ENCODE measurements at regions of chr3 and their contacts with region 1.

Region 1: GRCh38 chr3:49802719-49803464 is at the start of gene INKA1:
- DNase-seq: peak; percentile 83 to 92 (median 83)
- H3K4me3 ChIP-seq: peak within 1 kb of the TSS; percentile 91
- H3K4me3 Mint-ChIP-seq: peak within 1 kb of the TSS; percentile 86 to 95 (median 91)
- H3K27ac ChIP-seq: peak within 1 kb of the TSS; percentile 86
- H3K27ac Mint-ChIP-seq: peak within 1 kb of the TSS; percentile 81 to 97 (median 93)
- H3K4me1 ChIP-seq: peaks cover 35% of the 10 kb centered on the region
- H3K4me1 Mint-ChIP-seq: peaks cover 24 to 51% (median 33%) of the 10 kb centered on the region in 3 donors
- H3K27me3 ChIP-seq: no peaks in the 10 kb centered on the region
- H3K27me3 Mint-ChIP-seq: peaks cover 0 to 6% of the 10 kb centered on the region in 2 donors
- total RNA-seq, gene INKA1: 1.1 to 1.7 TPM

Region 2: DNA sequence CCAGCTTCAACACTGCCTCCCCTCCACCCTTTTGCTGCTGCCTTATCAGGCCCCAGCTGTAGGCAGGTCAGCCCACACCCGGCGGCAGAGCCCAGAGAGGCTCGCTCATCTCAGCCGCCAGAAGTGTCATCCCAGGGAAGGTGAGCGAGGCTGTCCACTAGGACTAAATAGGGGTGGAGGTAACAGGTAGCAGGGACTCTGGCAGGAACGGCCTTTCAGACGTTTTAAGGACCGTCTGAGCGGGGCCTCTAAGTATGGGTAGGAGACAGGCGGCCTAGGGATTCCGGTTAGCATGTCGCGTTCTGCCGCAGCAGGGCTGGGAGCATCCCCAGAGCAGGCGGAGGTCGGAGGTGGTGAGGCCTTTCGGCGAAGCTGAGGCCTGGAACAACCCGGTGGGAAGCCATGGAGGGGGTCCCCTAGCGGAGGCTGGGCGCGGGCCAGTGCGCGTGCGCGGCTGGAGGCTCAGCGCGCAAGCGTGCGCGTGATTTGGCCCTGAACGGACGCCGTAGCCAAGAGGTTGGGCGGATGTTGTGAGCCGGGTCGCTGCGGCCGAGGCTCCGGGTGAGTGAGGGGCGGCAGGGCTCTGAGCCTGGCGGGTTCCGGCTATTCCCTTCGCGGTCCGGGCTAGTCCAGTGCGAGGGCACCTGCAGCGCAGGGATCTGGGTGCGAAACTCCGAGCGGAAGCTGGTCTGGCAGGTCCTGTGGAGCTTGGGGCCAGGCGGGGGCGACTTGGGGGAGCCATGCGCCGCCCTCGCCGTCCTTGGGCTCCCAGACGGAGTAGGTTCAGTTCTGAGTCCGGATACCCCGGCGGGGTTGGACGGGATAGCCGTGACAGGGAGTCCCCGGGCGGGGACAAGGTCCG is 113.6 kb before region 1 on chr3 and contains the starts of genes MST1 and RNF123:
- CTCF ChIA-PET with region 1: no interaction called
- POLR2A ChIA-PET with region 1: no interaction called
- DNase-seq: peak; percentile 90 to 95 (median 92)
- H3K4me3 ChIP-seq: peak within 1 kb of the TSS; percentile 97
- H3K4me3 Mint-ChIP-seq: peak within 1 kb of the TSS; percentile 94 to 98 (median 97)
- H3K27ac ChIP-seq: peak within 1 kb of the TSS; percentile 76
- H3K27ac Mint-ChIP-seq: peak within 1 kb of the TSS; percentile 95 to 99 (median 96)
- H3K4me1 ChIP-seq: peaks cover 20% of the 10 kb centered on the region
- H3K4me1 Mint-ChIP-seq: peaks cover 34 to 66% (median 41%) of the 10 kb centered on the region in 3 donors
- H3K27me3 ChIP-seq: no peaks in the 10 kb centered on the region
- H3K27me3 Mint-ChIP-seq: peaks cover 0 to 5% of the 10 kb centered on the region in 2 donors
- total RNA-seq, gene MST1: 6.0 to 8.5 TPM
- total RNA-seq, gene RNF123: 38.8 to 43.7 TPM

Region 3: DNA sequence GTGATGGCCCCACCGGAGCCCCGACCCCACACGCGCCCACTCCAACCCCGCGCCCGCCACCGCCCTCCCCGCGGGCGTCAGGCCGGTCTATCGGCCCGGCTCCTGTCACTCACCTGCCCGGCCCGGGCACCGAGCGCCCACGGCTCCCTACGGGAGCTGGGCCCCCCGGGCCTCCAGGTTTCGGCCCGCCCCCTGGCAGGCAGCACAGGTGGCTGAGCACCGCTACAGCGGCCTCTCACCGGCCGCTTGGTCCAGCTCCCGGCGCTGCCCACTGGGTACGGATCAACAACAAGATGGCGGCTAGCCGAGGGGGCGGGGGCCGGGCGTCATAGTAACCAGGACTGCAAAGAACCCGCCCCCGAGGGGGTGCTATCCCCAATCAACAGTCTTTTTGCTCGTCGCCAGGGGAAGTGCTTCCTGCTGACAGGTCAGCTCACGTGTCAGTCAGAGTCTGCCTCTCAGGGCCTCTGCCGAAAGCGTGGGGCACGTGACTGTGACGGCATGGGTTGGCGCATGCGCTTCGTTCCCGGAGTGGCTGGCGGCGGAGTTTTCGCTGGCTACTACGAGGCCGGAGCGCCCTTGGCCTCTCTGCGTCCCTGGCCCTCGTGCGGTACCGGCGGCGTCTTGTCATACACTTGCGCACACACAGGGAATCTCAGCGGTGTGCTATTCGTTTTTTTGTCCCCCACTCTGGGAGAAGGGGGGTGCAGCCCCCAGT is 16.5 kb before region 1 on chr3 and contains the start of gene IP6K1:
- CTCF ChIA-PET with region 1: interaction called, 23 read pairs
- POLR2A ChIA-PET with region 1: interaction called, 18 read pairs
- DNase-seq: peak; percentile 99 to 100 (median 99)
- H3K4me3 ChIP-seq: peak within 1 kb of the TSS; percentile 90
- H3K4me3 Mint-ChIP-seq: peak within 1 kb of the TSS; percentile 93 to 98 (median 94)
- H3K27ac ChIP-seq: peak within 1 kb of the TSS; percentile 95
- H3K27ac Mint-ChIP-seq: peak within 1 kb of the TSS; percentile 98 to 100 (median 99)
- H3K4me1 ChIP-seq: peaks cover 35% of the 10 kb centered on the region
- H3K4me1 Mint-ChIP-seq: peaks cover 24 to 54% (median 44%) of the 10 kb centered on the region in 3 donors
- H3K27me3 ChIP-seq: no peaks in the 10 kb centered on the region
- H3K27me3 Mint-ChIP-seq: peaks cover 0 to 2% of the 10 kb centered on the region in 2 donors
- total RNA-seq, gene IP6K1: 37.1 to 47.5 TPM

Region 4: GRCh38 chr3:49813497-49814174 is 10.7 kb after region 1 on chr3 and contains the start of gene UBA7:
- CTCF ChIA-PET with region 1: interaction called, 35 read pairs
- POLR2A ChIA-PET with region 1: interaction called, 33 read pairs
- DNase-seq: peak in 4 of 5 donors; percentile 29 to 62 (median 44)
- H3K4me3 ChIP-seq: peak within 1 kb of the TSS; percentile 75
- H3K4me3 Mint-ChIP-seq: peak within 1 kb of the TSS; percentile 96 to 98 (median 98)
- H3K27ac ChIP-seq: peak within 1 kb of the TSS; percentile 63
- H3K27ac Mint-ChIP-seq: peak within 1 kb of the TSS; percentile 94 to 99 (median 99)
- H3K4me1 ChIP-seq: peaks cover 30% of the 10 kb centered on the region
- H3K4me1 Mint-ChIP-seq: peaks cover 26 to 47% (median 36%) of the 10 kb centered on the region in 3 donors
- H3K27me3 ChIP-seq: no peaks in the 10 kb centered on the region
- H3K27me3 Mint-ChIP-seq: no peaks in the 10 kb centered on the region
- total RNA-seq, gene UBA7: 57.8 to 58.3 TPM

Region 5: GRCh38 chr3:49844464-49845183 is 41.7 kb after region 1 on chr3:
- CTCF ChIA-PET with region 1: interaction called, 246 read pairs
- POLR2A ChIA-PET with region 1: interaction called, 41 read pairs
- DNase-seq: no peak
- H3K4me3 ChIP-seq: no peak overlapping the region
- H3K4me3 Mint-ChIP-seq: no peak overlapping the region
- H3K27ac ChIP-seq: no peak overlapping the region
- H3K27ac Mint-ChIP-seq: peak overlapping the region in 1 of 8 donors; percentile 55
- H3K4me1 ChIP-seq: no peaks in the 10 kb centered on the region
- H3K4me1 Mint-ChIP-seq: no peaks in the 10 kb centered on the region
- H3K27me3 ChIP-seq: no peaks in the 10 kb centered on the region
- H3K27me3 Mint-ChIP-seq: peaks cover 0 to 2% of the 10 kb centered on the region in 2 donors

Region 6: GRCh38 chr3:49883998-49884397 is 81.1 kb after region 1 on chr3:
- CTCF ChIA-PET with region 1: no interaction called
- POLR2A ChIA-PET with region 1: interaction called, 11 read pairs
- DNase-seq: no peak
- H3K4me3 ChIP-seq: no peak overlapping the region
- H3K4me3 Mint-ChIP-seq: no peak overlapping the region
- H3K27ac ChIP-seq: no peak overlapping the region
- H3K27ac Mint-ChIP-seq: no peak overlapping the region
- H3K4me1 ChIP-seq: no peaks in the 10 kb centered on the region
- H3K4me1 Mint-ChIP-seq: no peaks in the 10 kb centered on the region
- H3K27me3 ChIP-seq: no peaks in the 10 kb centered on the region
- H3K27me3 Mint-ChIP-seq: peaks cover 0 to 4% of the 10 kb centered on the region in 2 donors

Region 7: GRCh38 chr3:49939858-49940666 is 137.2 kb after region 1 on chr3 and contains the start of gene RBM6:
- CTCF ChIA-PET with region 1: no interaction called
- POLR2A ChIA-PET with region 1: no interaction called
- DNase-seq: peak; percentile 87 to 95 (median 91)
- H3K4me3 ChIP-seq: peak within 1 kb of the TSS; percentile 73
- H3K4me3 Mint-ChIP-seq: peak within 1 kb of the TSS; percentile 96 to 100 (median 98)
- H3K27ac ChIP-seq: peak within 1 kb of the TSS; percentile 78
- H3K27ac Mint-ChIP-seq: peak within 1 kb of the TSS; percentile 97 to 100 (median 98)
- H3K4me1 ChIP-seq: peaks cover 12% of the 10 kb centered on the region
- H3K4me1 Mint-ChIP-seq: peaks cover 25 to 38% (median 38%) of the 10 kb centered on the region in 3 donors
- H3K27me3 ChIP-seq: no peaks in the 10 kb centered on the region
- H3K27me3 Mint-ChIP-seq: no peaks in the 10 kb centered on the region
- total RNA-seq, gene RBM6: 71.6 to 75.8 TPM

Region 8: GRCh38 chr3:50227390-50228183 is 424.7 kb after region 1 on chr3:
- CTCF ChIA-PET with region 1: no interaction called
- POLR2A ChIA-PET with region 1: no interaction called
- DNase-seq: peak; percentile 88 to 93 (median 89)
- H3K4me3 ChIP-seq: peak overlapping the region; percentile 86
- H3K4me3 Mint-ChIP-seq: peak overlapping the region; percentile 89 to 99 (median 94)
- H3K27ac ChIP-seq: peak overlapping the region; percentile 63
- H3K27ac Mint-ChIP-seq: peak overlapping the region; percentile 79 to 96 (median 92)
- H3K4me1 ChIP-seq: peaks cover 20% of the 10 kb centered on the region
- H3K4me1 Mint-ChIP-seq: peaks cover 15 to 33% (median 24%) of the 10 kb centered on the region in 3 donors
- H3K27me3 ChIP-seq: no peaks in the 10 kb centered on the region
- H3K27me3 Mint-ChIP-seq: peaks cover 0 to 3% of the 10 kb centered on the region in 2 donors

Region 9: DNA sequence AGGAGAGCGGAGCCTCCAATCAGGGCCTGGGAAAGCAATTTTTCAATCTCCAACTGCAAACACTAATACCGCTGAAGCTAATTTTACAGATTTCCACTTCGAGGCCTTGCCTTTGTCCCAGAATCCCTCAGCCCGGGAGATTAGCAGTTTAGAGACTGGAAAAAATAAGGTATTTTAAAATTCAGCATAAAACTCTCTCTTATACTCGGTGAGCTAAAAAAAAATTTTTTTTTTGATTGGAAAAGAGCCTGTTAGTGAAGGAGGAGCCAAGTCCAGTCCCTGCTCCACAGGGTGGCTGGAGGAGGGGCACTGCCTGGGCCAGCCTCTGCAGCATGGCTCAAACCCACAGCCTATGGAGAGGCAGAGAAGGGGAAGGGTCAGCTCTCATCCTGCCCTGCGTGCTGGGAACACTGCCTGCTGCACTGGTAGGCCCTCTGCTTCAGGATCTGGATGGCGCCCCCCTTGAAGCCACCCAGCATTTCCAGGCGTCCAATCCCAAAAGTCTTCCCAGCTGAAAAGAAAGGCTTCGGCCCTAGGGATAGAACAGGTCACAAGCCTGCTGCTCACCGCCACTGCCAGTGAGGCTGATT is 651.7 kb after region 1 on chr3:
- CTCF ChIA-PET with region 1: no interaction called
- POLR2A ChIA-PET with region 1: no interaction called
- DNase-seq: no peak
- H3K4me3 ChIP-seq: no peak overlapping the region
- H3K4me3 Mint-ChIP-seq: no peak overlapping the region
- H3K27ac ChIP-seq: no peak overlapping the region
- H3K27ac Mint-ChIP-seq: peak overlapping the region in 1 of 8 donors; percentile 72
- H3K4me1 ChIP-seq: peaks cover 9% of the 10 kb centered on the region
- H3K4me1 Mint-ChIP-seq: peaks cover 11 to 14% (median 13%) of the 10 kb centered on the region in 3 donors
- H3K27me3 ChIP-seq: no peaks in the 10 kb centered on the region
- H3K27me3 Mint-ChIP-seq: peaks cover 2 to 3% of the 10 kb centered on the region in 2 donors